Mammary epithelial cell (primary cell): ENCODE measurements at regions of chr11 and their contacts with region 1.

Region 1: GRCh38 chr11:92941676-92942571 is 27.5 kb upstream of the MTNR1B start:
- DNase-seq: peak; percentile 33
- H3K4me3 ChIP-seq: no peak overlapping the region
- H3K27ac ChIP-seq: no peak overlapping the region
- H3K4me1 ChIP-seq: no peaks in the 10 kb centered on the region
- H3K27me3 ChIP-seq: no peaks in the 10 kb centered on the region
- CTCF ChIP-seq: peak; percentile 71 to 73

Region 2: GRCh38 chr11:92845805-92846204 is 96.1 kb before region 1 on chr11:
- CTCF ChIA-PET with region 1: no interaction called
- dilution Hi-C with region 1: no loop called
- in situ Hi-C with region 1: no loop called
- intact Hi-C with region 1: no loop called
- DNase-seq: peak; percentile 64
- H3K4me3 ChIP-seq: no peak overlapping the region
- H3K27ac ChIP-seq: no peak overlapping the region
- H3K4me1 ChIP-seq: peaks cover 34% of the 10 kb centered on the region
- H3K27me3 ChIP-seq: no peaks in the 10 kb centered on the region
- CTCF ChIP-seq: no peak

Region 3: DNA sequence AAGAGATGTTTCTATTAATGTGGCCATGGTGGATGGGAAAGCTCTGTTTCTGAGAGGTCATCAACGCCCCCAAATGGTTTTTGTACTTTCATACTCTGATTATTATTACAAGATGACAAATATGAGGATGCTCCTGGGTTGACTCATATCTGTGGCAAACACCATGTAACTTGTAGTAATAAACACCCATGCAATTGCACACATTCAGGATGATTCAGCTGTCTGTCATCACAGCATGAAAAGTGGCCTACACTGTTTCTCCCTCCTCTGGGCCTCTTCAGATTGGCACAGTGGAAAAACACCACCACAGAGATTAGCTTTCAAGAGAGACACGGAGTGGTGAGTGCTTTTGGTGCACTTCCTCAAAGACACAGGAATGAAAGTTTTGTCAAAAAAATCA is 113.0 kb after region 1 on chr11:
- CTCF ChIA-PET with region 1: no interaction called
- dilution Hi-C with region 1: loop called (anchors 5 kb)
- in situ Hi-C with region 1: no loop called
- intact Hi-C with region 1: loop called (anchors 1 kb)
- DNase-seq: peak; percentile 97
- H3K4me3 ChIP-seq: no peak overlapping the region
- H3K27ac ChIP-seq: peak overlapping the region; percentile 65
- H3K4me1 ChIP-seq: peaks cover 9% of the 10 kb centered on the region
- H3K27me3 ChIP-seq: no peaks in the 10 kb centered on the region
- CTCF ChIP-seq: peak in 1 of 2 donors; percentile 20

Region 4: DNA sequence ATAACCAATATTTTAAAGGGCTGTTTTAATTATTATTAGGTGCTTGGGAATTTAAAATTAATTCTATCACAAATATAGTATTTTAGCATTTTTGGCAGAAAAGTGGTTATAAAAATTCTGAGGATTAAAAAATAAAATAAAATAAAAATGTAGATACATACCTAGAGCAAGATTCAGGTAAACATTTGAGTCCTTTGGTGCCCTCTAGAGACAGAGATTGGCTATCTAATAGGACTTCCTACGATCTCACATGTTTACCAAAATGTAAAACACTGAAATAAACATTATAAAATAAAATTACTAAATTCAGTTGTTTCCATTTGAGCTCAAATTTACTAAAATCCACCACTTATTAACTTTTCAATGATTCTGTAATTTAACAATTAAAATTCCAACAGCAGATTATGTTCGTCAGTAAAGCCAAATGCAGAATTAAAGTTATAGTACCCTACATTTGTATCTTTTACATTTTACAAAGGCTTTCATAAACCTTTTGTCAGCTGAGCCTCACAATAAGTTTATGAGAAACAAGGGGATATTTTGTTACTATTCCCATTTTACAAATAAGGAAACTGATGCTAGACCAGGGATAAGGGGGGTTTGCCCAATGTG is 228.1 kb after region 1 on chr11:
- CTCF ChIA-PET with region 1: no interaction called
- dilution Hi-C with region 1: loop called (anchors 25 kb)
- in situ Hi-C with region 1: loop called (anchors 10 to 25 kb)
- intact Hi-C with region 1: loop called (anchors 1 kb)
- DNase-seq: peak; percentile 18
- H3K4me3 ChIP-seq: no peak overlapping the region
- H3K27ac ChIP-seq: no peak overlapping the region
- H3K4me1 ChIP-seq: no peaks in the 10 kb centered on the region
- H3K27me3 ChIP-seq: no peaks in the 10 kb centered on the region
- CTCF ChIP-seq: peak; percentile 42 to 65

Region 5: DNA sequence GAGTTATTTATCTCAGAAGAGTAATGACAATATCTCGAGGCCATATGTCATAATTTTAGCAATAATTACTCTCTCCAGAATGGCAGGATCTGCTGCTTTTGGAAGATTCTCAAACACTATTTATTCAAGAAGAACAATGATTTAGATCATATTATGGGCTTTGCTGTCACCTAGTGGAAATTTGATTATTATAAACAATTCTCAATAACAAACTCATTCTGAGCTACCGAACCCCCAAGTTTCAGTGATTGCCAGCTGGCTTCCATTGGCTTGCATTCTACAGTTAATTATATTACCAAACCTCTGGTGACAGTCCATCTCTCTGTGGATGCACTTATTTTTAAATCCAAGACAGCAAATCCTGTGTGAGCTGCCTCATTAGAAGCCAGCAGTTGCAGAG is 283.7 kb after region 1 on chr11:
- CTCF ChIA-PET with region 1: interaction called, 3 read pairs
- dilution Hi-C with region 1: no loop called
- in situ Hi-C with region 1: no loop called
- intact Hi-C with region 1: loop called (anchors 1 kb)
- DNase-seq: no peak
- H3K4me3 ChIP-seq: no peak overlapping the region
- H3K27ac ChIP-seq: no peak overlapping the region
- H3K4me1 ChIP-seq: no peaks in the 10 kb centered on the region
- H3K27me3 ChIP-seq: no peaks in the 10 kb centered on the region
- CTCF ChIP-seq: peak; percentile 16 to 35

Region 6: GRCh38 chr11:93340223-93340622 is 398.3 kb after region 1 on chr11:
- CTCF ChIA-PET with region 1: no interaction called
- dilution Hi-C with region 1: no loop called
- in situ Hi-C with region 1: no loop called
- intact Hi-C with region 1: no loop called
- DNase-seq: no peak
- H3K4me3 ChIP-seq: no peak overlapping the region
- H3K27ac ChIP-seq: no peak overlapping the region
- H3K4me1 ChIP-seq: no peaks in the 10 kb centered on the region
- H3K27me3 ChIP-seq: no peaks in the 10 kb centered on the region
- CTCF ChIP-seq: no peak

Region 7: GRCh38 chr11:93652161-93652597 is 710.3 kb after region 1 on chr11:
- CTCF ChIA-PET with region 1: no interaction called
- dilution Hi-C with region 1: no loop called
- in situ Hi-C with region 1: loop called in 1 of 2 experiments (anchors 25 kb)
- intact Hi-C with region 1: no loop called
- DNase-seq: peak; percentile 19
- H3K4me3 ChIP-seq: no peak overlapping the region
- H3K27ac ChIP-seq: no peak overlapping the region
- H3K4me1 ChIP-seq: no peaks in the 10 kb centered on the region
- H3K27me3 ChIP-seq: no peaks in the 10 kb centered on the region
- CTCF ChIP-seq: peak; percentile 59 to 65